ENCODE measurements at regions of chr4 and their contacts with region 1.

Region 1: DNA sequence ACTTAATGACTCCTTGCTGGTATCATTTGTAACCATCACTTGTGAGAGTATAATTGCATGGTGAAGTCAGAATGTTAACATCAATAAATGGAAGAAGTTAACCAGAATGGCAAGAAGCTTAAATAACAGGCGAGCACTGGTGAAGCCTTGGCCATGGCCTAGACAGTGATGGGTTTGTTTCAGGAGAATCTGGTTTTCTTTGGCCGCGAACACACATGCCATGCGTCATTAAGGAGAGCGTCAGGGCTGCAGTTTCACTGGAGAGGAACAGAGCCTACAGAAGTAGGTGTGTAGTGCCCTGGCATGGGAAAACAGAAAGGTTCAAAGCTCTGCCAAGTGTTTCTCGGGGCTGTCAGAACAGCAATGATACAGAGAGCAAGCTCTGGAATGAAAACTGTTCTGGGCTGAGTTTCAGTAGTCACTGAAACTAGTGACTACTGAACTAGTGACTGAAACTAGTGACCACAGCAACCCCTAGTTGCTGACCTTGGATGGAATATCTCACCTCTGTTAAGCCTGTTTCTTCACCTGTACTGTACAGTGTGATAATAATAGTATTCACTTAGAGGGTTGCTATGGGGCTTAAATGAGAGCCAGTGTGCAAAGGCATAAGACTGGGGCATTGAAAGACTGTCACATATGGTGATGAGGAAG is 93.8 kb downstream of the C4orf51 start:
- DNase-seq: peak; percentile 15
- H3K4me3 ChIP-seq: no peak overlapping the region
- H3K27ac ChIP-seq: peak overlapping the region; percentile 4 to 78 (median 57)
- H3K4me1 ChIP-seq: peaks cover 0 to 4% (median 2%) of the 10 kb centered on the region in 4 donors
- H3K27me3 ChIP-seq: no peaks in the 10 kb centered on the region
- CTCF ChIP-seq: no peak
- EP300 ChIP-seq: peak; percentile 44
- POLR2A ChIP-seq: no peak

Region 2: GRCh38 chr4:145732895-145733880 is 40.5 kb before region 1 on chr4:
- in situ Hi-C with region 1: no loop called
- intact Hi-C with region 1: loop called (anchors 5 kb)
- DNase-seq: peak; percentile 95
- H3K4me3 ChIP-seq: peak overlapping the region; percentile 56 to 87 (median 60)
- H3K27ac ChIP-seq: peak overlapping the region; percentile 92 to 96 (median 93)
- H3K4me1 ChIP-seq: peaks cover 17 to 62% (median 49%) of the 10 kb centered on the region in 4 donors
- H3K27me3 ChIP-seq: no peaks in the 10 kb centered on the region
- CTCF ChIP-seq: peak in 1 of 5 experiments; percentile 20
- EP300 ChIP-seq: no peak
- POLR2A ChIP-seq: peak; percentile 77

Measured in transverse colon (tissue), 4 donors.